Transverse colon (tissue), 4 donors: ENCODE measurements at regions of chr19 and their contacts with region 1.

Region 1: GRCh38 chr19:6279931-6280591 is at the start of gene MLLT1:
- DNase-seq: peak; percentile 97
- H3K4me3 ChIP-seq: peak within 1 kb of the TSS; percentile 90 to 97 (median 95)
- H3K27ac ChIP-seq: peak within 1 kb of the TSS; percentile 84 to 88 (median 87)
- H3K4me1 ChIP-seq: peaks cover 35 to 46% (median 40%) of the 10 kb centered on the region in 4 donors
- H3K27me3 ChIP-seq: no peaks in the 10 kb centered on the region
- CTCF ChIP-seq: peak; percentile 46 to 85 (median 75)
- EP300 ChIP-seq: no peak
- POLR2A ChIP-seq: no peak
- total RNA-seq, gene MLLT1: 12.3 to 34.6 (median 19.7) TPM

Region 2: GRCh38 chr19:6199240-6199983 is 80.6 kb before region 1 on chr19:
- in situ Hi-C with region 1: loop called in 1 of 4 experiments (anchors 25 kb)
- intact Hi-C with region 1: no loop called
- DNase-seq: peak; percentile 100
- H3K4me3 ChIP-seq: peak overlapping the region; percentile 45 to 84 (median 52)
- H3K27ac ChIP-seq: peak overlapping the region; percentile 70 to 87 (median 80)
- H3K4me1 ChIP-seq: peaks cover 8 to 15% (median 13%) of the 10 kb centered on the region in 4 donors
- H3K27me3 ChIP-seq: no peaks in the 10 kb centered on the region
- CTCF ChIP-seq: peak; percentile 35 to 79 (median 50)
- EP300 ChIP-seq: no peak
- POLR2A ChIP-seq: no peak

Region 3: GRCh38 chr19:6218491-6219162 is 61.4 kb before region 1 on chr19:
- in situ Hi-C with region 1: no loop called
- intact Hi-C with region 1: loop called (anchors 5 kb)
- DNase-seq: peak; percentile 89
- H3K4me3 ChIP-seq: no peak overlapping the region
- H3K27ac ChIP-seq: peak overlapping the region in 2 of 4 donors; percentile 13 to 62
- H3K4me1 ChIP-seq: peaks cover 6 to 36% (median 24%) of the 10 kb centered on the region in 4 donors
- H3K27me3 ChIP-seq: no peaks in the 10 kb centered on the region
- CTCF ChIP-seq: peak; percentile 97 to 99 (median 98)
- EP300 ChIP-seq: no peak
- POLR2A ChIP-seq: no peak